ENCODE measurements at regions of chr12 and their contacts with region 1.

Region 1: GRCh38 chr12:41092115-41092514 is 96.0 kb upstream of the PDZRN4 start:
- DNase-seq: no peak
- H3K4me3 ChIP-seq: no peak overlapping the region
- H3K27ac ChIP-seq: no peak overlapping the region
- H3K4me1 ChIP-seq: peaks cover 0 to 8% (median 0%) of the 10 kb centered on the region in 4 donors
- H3K27me3 ChIP-seq: no peaks in the 10 kb centered on the region
- CTCF ChIP-seq: no peak

Region 2: DNA sequence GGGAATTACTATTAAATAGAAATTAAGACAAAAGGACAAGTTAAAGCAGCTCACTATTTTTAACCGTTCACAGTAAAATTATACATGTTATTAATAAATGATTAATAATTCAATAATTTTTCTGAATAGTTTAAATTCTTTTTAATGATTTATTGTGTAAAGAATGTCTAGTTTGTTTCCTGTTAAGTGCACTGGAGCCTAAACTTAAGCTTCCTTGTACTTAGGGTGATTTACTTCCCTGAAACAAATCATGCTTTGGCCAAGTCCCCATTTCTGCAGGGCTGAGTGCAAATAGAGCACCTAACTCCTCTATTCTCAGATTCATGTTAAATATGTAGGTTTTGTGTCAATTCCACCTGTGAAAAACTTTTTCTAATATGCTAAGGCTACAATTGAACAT is 92.9 kb before region 1 on chr12:
- intact Hi-C with region 1: no loop called
- DNase-seq: no peak
- H3K4me3 ChIP-seq: no peak overlapping the region
- H3K27ac ChIP-seq: no peak overlapping the region
- H3K4me1 ChIP-seq: no peaks in the 10 kb centered on the region
- H3K27me3 ChIP-seq: no peaks in the 10 kb centered on the region
- CTCF ChIP-seq: no peak

Region 3: GRCh38 chr12:41045509-41045908 is 46.6 kb before region 1 on chr12:
- intact Hi-C with region 1: loop called (anchors 1 kb)
- DNase-seq: no peak
- H3K4me3 ChIP-seq: no peak overlapping the region
- H3K27ac ChIP-seq: peak overlapping the region; percentile 36 to 38
- H3K4me1 ChIP-seq: peaks cover 0 to 44% (median 1%) of the 10 kb centered on the region in 4 donors
- H3K27me3 ChIP-seq: no peaks in the 10 kb centered on the region
- CTCF ChIP-seq: no peak

Region 4: GRCh38 chr12:41361738-41362137 is 269.6 kb after region 1 on chr12:
- intact Hi-C with region 1: no loop called
- DNase-seq: no peak
- H3K4me3 ChIP-seq: no peak overlapping the region
- H3K27ac ChIP-seq: no peak overlapping the region
- H3K4me1 ChIP-seq: peaks cover 0 to 20% (median 6%) of the 10 kb centered on the region in 4 donors
- H3K27me3 ChIP-seq: no peaks in the 10 kb centered on the region
- CTCF ChIP-seq: no peak